HAP-1 (cell line): ENCODE measurements at regions of chr14 and their contacts with region 1.

Region 1: DNA sequence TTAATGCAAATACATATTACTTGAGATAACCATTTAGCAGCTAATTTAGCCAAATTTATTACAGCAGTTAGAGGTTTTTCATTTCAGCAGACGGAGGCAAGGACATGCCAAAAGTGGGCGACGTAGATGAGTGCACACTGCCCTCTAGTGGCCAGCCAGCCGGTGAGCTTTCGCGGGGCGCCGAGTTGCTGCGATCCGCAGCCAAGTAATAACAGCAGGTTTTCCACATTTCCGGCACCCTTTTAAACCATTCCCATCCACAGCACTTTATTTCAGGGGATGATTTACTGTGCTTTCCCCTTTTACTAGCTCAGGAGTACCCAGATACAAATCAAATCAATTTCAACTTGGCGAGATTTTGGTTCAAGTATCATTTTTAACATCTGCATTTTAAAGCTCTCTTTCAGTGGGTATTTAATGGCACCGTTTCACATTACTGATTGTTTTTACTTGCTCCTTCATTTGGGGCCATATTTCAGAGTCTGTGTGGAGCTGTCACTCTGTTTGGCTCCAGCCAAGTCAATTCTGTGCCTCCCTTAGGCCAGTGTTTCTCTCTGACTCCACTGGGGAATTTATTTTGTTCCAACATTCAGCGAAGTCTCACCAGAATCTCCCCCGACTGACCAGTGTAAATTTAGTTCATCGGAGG is 158.0 kb downstream of the EGLN3 start:
- DNase-seq: peak; percentile 68 to 89
- H3K4me3 ChIP-seq: no peak overlapping the region
- H3K4me1 ChIP-seq: peaks cover 10% of the 10 kb centered on the region
- H3K27me3 ChIP-seq: no peaks in the 10 kb centered on the region

Region 2: GRCh38 chr14:32576088-32576795 is 1216.6 kb before region 1 on chr14:
- in situ Hi-C with region 1: loop called (anchors 10 kb)
- DNase-seq: peak; percentile 62 to 63
- H3K4me3 ChIP-seq: no peak overlapping the region
- H3K4me1 ChIP-seq: no peaks in the 10 kb centered on the region
- H3K27me3 ChIP-seq: 0 out of 2 replicates have a peak, but pooled peaks cover 10% of the 10 kb centered on the region

Region 3: DNA sequence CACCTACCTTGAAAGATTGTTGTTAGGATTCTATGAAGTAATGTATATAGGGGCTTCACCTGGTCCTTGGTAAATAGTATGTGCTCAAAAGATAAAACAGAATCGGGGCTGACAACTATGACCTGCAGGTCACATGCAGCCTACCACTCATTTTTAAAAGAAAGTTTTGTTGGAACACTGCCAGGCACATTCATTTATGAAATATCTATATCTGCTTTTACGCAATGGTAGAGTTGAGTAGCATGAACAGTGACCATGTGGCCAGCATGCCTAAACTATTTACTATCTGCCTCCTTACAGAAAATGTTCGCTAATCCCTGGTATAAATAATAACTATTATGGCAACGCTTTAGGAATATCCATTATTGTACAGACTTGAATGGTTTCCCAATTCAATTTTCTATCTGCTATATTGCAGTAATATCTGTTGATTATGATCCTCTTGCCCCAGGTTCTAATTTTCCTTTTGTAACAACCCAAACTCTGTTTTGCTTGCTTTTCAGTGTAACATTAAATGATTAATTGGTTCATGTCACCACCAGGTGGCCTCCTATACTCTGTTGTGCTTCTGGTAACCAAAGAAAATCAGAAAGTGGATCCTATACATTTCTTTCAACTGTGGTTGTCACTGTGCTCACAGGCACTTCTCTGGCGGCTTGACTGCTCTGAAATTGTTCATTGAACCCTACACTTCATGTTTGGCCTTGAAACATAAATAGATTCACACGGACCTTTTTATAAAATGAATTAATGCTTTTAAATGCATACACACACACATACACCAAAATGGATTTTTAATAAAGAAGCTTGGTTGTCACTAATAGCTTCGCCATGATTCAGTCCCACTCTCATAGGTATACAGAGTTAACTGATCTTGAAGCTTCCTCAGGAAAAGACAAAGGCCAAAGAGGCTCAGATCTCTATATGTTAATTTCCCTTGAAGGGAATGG is 1081.8 kb before region 1 on chr14:
- in situ Hi-C with region 1: loop called (anchors 25 kb)
- DNase-seq: peak; percentile 63 to 75
- H3K4me3 ChIP-seq: no peak overlapping the region
- H3K4me1 ChIP-seq: peaks cover 14% of the 10 kb centered on the region
- H3K27me3 ChIP-seq: no peaks in the 10 kb centered on the region